PC-3 (cell line): ENCODE measurements at regions of chr5 and their contacts with region 1.

Region 1: GRCh38 chr5:1167728-1168709 is 33.4 kb upstream of the SLC6A19 start:
- DNase-seq: peak; percentile 84
- ATAC-seq: peak; percentile 92
- H3K4me3 ChIP-seq: peak overlapping the region; percentile 65
- H3K27ac ChIP-seq: no peak overlapping the region
- H3K4me1 ChIP-seq: peaks cover 7% of the 10 kb centered on the region; the same call in 1 of the 2 replicates
- H3K27me3 ChIP-seq: no peaks in the 10 kb centered on the region
- CTCF ChIP-seq: peak; percentile 81

Region 2: GRCh38 chr5:923281-923873 is 244.6 kb before region 1 on chr5:
- CTCF ChIA-PET with region 1: no interaction called
- POLR2A ChIA-PET with region 1: no interaction called
- intact Hi-C with region 1: loop called (anchors 1 kb)
- DNase-seq: peak; percentile 72
- ATAC-seq: peak; percentile 95
- H3K4me3 ChIP-seq: no peak overlapping the region
- H3K27ac ChIP-seq: no peak overlapping the region
- H3K4me1 ChIP-seq: no peaks in the 10 kb centered on the region
- H3K27me3 ChIP-seq: no peaks in the 10 kb centered on the region
- CTCF ChIP-seq: peak; percentile 85

Region 3: DNA sequence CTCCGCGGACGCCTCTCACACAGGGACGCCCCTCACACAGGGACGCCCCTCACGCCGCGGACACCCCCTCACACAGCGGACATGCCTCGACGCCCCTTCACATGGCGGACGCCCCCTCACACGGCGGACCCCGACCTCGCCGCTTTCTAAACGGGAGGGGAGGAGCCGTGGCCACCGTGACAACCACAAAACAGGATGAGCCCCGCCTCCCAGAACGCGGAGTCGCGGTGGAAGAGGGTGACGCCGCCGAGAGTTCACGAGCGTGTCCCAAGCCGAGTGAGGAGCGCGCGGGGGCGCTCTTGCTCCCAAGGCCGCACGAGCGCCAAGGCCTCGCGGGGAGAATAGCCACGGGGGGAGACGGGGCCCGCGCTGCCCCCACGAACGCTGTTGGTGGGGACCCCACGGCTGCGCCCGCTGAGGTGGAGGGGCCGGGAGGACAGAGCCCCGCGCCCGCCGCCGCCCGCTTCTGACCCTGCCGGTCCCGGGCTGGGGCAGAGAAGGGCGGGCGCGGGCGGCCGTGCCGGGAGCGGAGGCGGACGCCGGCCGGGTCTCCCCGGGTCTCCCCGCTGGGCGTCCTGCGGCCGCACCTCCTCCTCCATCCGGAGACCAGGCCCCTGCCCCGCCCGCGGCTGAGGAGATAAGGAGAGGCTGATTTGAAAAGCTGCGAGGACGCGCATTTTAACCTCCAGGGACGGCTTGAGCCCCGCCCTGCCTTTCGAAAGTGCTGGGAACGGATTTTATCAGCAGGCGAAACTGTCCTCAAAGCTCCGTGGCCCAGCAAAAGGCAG is 163.4 kb before region 1 on chr5:
- CTCF ChIA-PET with region 1: no interaction called
- POLR2A ChIA-PET with region 1: no interaction called
- intact Hi-C with region 1: loop called (anchors 10 kb)
- DNase-seq: peak; percentile 55
- ATAC-seq: peak; percentile 54
- H3K4me3 ChIP-seq: peak overlapping the region; percentile 64
- H3K27ac ChIP-seq: no peak overlapping the region
- H3K4me1 ChIP-seq: peaks cover 26% of the 10 kb centered on the region
- H3K27me3 ChIP-seq: peaks cover 30% of the 10 kb centered on the region
- CTCF ChIP-seq: peak; percentile 67

Region 4: DNA sequence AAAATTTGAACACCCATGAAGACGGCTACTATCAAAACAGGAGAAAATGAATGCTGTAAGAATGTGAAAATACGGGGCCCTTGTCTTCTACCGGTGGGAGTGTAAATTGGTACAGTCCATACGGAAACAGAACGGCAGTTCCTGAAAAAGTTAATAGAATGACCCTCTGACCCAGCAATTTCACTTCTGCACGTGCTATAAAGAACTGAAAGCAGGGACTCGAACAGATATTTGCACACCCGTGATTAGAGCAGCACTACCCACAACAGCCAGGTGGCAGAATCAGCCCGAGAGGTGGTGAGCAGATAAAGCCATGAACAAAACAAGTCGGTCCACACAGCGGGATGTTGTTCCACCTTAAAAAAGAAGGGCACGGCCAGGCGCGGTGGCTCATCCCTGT is 33.5 kb before region 1 on chr5:
- CTCF ChIA-PET with region 1: interaction called, 4 read pairs
- POLR2A ChIA-PET with region 1: no interaction called
- intact Hi-C with region 1: loop called (anchors 1 kb)
- DNase-seq: peak; percentile 7
- ATAC-seq: peak; percentile 34; the same call in 1 of the 2 replicates
- H3K4me3 ChIP-seq: no peak overlapping the region
- H3K27ac ChIP-seq: no peak overlapping the region
- H3K4me1 ChIP-seq: peaks cover 18% of the 10 kb centered on the region
- H3K27me3 ChIP-seq: no peaks in the 10 kb centered on the region
- CTCF ChIP-seq: peak; percentile 35